CD14-positive monocyte (primary cell): ENCODE measurements at regions of chr1 and their contacts with region 1.

Region 1: DNA sequence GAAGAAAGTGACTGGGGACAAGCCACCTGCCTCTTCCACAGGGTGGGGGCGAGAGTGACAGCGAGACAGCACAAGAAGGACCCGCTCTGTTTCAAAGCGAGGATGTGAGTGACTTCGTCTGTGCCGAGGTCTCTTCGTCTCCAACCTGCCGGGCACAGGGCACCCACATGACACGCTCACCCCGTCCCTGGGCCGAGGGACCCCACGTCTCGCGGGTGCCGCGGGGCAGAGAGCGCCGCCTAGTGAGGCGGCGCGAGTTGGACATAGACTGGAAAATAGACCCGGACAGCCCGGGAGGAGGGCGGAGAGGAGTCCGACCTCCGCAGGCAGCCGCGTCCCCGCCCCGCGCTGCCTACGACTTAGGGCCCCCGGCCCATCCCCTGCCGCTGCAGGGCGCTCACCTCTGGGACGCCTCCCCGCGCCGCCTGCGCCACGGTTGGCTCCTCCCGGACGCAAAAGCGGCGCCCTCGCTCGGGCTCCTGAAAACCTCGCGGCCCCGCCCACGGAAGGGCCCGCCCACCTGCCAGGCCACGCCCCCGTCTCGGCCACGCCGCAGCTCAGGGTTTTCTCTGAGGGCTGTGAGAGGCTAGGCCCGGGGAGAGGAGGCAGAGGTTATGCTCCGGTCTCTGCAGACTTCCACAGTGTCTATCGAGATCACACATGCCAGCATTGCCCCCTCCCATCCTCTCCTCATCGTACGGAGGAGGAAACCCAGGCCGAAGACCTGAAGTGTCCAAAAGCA is at the start of gene TLR5:
- DNase-seq: peak; percentile 70 to 78 (median 74)
- H3K4me3 ChIP-seq: peak within 1 kb of the TSS; percentile 57 to 85 (median 62)
- H3K4me3 Mint-ChIP-seq: peak within 1 kb of the TSS; percentile 76 to 90
- H3K27ac ChIP-seq: peak within 1 kb of the TSS; percentile 74 to 87
- H3K27ac Mint-ChIP-seq: peak within 1 kb of the TSS; percentile 85 to 94 (median 93)
- H3K4me1 ChIP-seq: peaks cover 61 to 72% of the 10 kb centered on the region in 2 donors
- H3K4me1 Mint-ChIP-seq: peaks cover 64% of the 10 kb centered on the region
- H3K27me3 ChIP-seq: no peaks in the 10 kb centered on the region
- H3K27me3 Mint-ChIP-seq: peaks cover 0 to 2% (median 0%) of the 10 kb centered on the region in 3 donors
- CTCF ChIP-seq: peak; percentile 88
- polyA plus RNA-seq, gene TLR5: 35.5 to 58.0 (median 45.7) TPM

Region 2: DNA sequence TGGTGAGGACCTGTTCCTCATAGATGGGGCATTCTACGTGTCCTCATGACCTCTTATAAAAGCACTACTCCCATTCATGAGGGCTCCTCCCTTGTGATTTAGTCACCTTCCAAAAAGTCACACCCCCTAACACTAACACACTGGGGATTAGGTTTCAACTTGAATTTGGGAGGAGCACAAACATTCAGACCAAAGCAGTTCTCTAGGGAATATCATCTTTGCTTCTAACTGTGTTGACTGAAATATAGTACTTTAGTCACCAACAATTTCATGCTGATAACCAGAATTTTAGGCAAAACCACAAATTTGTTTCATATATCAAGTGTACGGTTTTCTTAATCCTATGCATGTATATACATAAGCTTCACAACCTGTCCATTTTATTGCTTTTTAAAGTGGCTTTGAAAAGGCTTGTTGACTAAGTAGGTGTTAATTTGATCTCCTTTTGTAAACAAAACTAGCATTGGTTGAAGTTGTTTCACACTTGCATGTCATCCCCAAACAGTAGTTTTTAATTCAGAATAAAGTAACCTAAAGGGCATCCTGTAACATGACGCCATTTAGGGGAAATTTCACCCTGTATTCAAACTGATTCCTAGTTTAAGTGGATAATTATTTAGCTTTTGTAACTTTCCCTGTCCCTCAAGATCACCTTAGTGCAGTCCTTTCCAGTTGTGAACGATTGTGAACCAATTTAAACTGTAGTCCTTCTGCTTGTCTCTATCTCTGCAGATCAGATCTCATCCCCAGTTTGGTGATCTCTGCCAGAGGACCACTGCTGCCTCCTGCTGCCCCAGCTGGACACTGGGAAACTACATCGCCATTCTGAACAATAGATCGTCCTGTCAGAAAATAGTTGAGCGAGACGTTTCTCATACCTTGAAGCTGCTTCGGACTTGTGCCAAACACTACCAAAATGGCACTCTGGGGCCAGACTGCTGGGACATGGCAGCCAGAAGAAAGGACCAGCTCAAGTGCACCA is 141.0 kb before region 1 on chr1:
- intact Hi-C with region 1: no loop called
- DNase-seq: no peak
- H3K4me3 ChIP-seq: no peak overlapping the region
- H3K4me3 Mint-ChIP-seq: no peak overlapping the region
- H3K27ac ChIP-seq: no peak overlapping the region
- H3K27ac Mint-ChIP-seq: no peak overlapping the region
- H3K4me1 ChIP-seq: no peaks in the 10 kb centered on the region
- H3K4me1 Mint-ChIP-seq: no peaks in the 10 kb centered on the region
- H3K27me3 ChIP-seq: no peaks in the 10 kb centered on the region
- H3K27me3 Mint-ChIP-seq: no peaks in the 10 kb centered on the region
- CTCF ChIP-seq: no peak

Region 3: GRCh38 chr1:223175032-223175431 is 32.1 kb after region 1 on chr1:
- intact Hi-C with region 1: loop called in 1 of 2 experiments (anchors 5 kb)
- DNase-seq: peak in 1 of 3 donors; percentile 27
- H3K4me3 ChIP-seq: no peak overlapping the region
- H3K4me3 Mint-ChIP-seq: peak overlapping the region in 1 of 2 donors; percentile 88
- H3K27ac ChIP-seq: peak overlapping the region; percentile 96 to 97
- H3K27ac Mint-ChIP-seq: peak overlapping the region; percentile 94 to 99 (median 97)
- H3K4me1 ChIP-seq: peaks cover 56 to 57% of the 10 kb centered on the region in 2 donors
- H3K4me1 Mint-ChIP-seq: peaks cover 55% of the 10 kb centered on the region
- H3K27me3 ChIP-seq: no peaks in the 10 kb centered on the region
- H3K27me3 Mint-ChIP-seq: peaks cover 0 to 1% (median 0%) of the 10 kb centered on the region in 3 donors
- CTCF ChIP-seq: peak; percentile 21

Region 4: GRCh38 chr1:223201967-223202366 is 59.0 kb after region 1 on chr1:
- intact Hi-C with region 1: loop called in 1 of 2 experiments (anchors 5 kb)
- DNase-seq: no peak
- H3K4me3 ChIP-seq: no peak overlapping the region
- H3K4me3 Mint-ChIP-seq: no peak overlapping the region
- H3K27ac ChIP-seq: no peak overlapping the region
- H3K27ac Mint-ChIP-seq: peak overlapping the region in 1 of 7 donors; percentile 41
- H3K4me1 ChIP-seq: peaks cover 24 to 34% of the 10 kb centered on the region in 2 donors
- H3K4me1 Mint-ChIP-seq: peaks cover 41% of the 10 kb centered on the region
- H3K27me3 ChIP-seq: no peaks in the 10 kb centered on the region
- H3K27me3 Mint-ChIP-seq: peaks cover 0 to 2% (median 2%) of the 10 kb centered on the region in 3 donors
- CTCF ChIP-seq: no peak